ENCODE measurements at regions of chr5 and their contacts with region 1.

Region 1: DNA sequence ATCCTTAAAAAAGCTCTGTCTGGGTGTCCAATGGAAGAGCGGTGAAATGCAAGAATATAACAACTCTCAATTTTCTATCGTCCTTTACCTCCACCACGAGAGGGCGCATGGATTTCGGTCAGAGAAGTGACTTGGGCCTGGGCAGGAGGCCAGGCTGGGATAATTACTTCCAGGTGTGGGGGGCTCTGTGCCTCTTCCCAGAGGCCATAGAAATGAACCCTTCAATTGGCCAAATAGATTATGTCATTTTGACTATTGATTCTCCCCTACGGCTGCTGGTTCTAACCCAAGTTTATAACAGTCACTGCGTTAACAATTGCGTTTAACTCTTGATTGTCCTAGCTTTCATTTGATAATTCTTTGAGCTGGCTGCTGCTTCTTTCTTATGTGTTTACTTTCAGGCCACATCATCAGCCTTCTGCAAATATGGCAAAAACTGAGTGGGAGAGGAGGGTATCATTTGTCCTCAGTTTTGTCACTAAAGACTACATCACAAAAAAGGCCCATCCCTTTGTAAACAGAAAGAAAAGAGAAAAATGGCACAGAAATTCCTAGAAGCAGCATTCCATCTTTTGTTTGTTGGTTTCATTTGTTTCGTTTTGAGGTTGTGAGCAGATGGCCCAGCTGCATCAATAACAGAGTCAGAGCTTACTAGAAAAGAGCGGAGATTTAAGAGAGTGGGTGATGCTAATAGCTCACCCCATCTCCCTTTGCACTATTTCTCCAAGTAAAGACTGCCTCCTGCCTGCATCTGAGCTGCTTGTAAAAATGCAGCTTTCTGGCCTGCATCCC is 45.4 kb upstream of the ZFR start:
- DNase-seq: peak; percentile 82
- H3K4me3 Mint-ChIP-seq: no peak overlapping the region
- H3K27ac Mint-ChIP-seq: no peak overlapping the region
- H3K4me1 Mint-ChIP-seq: no peaks in the 10 kb centered on the region
- H3K27me3 Mint-ChIP-seq: no peaks in the 10 kb centered on the region
- CTCF ChIP-seq: peak; percentile 82

Region 2: GRCh38 chr5:31886206-31886605 is 603.8 kb before region 1 on chr5:
- CTCF ChIA-PET with region 1: interaction called, 11 read pairs
- intact Hi-C with region 1: no loop called
- DNase-seq: no peak
- H3K4me3 Mint-ChIP-seq: no peak overlapping the region
- H3K27ac Mint-ChIP-seq: no peak overlapping the region
- H3K4me1 Mint-ChIP-seq: peaks cover 14% of the 10 kb centered on the region
- H3K27me3 Mint-ChIP-seq: peaks cover 44% of the 10 kb centered on the region
- CTCF ChIP-seq: no peak

Region 3: DNA sequence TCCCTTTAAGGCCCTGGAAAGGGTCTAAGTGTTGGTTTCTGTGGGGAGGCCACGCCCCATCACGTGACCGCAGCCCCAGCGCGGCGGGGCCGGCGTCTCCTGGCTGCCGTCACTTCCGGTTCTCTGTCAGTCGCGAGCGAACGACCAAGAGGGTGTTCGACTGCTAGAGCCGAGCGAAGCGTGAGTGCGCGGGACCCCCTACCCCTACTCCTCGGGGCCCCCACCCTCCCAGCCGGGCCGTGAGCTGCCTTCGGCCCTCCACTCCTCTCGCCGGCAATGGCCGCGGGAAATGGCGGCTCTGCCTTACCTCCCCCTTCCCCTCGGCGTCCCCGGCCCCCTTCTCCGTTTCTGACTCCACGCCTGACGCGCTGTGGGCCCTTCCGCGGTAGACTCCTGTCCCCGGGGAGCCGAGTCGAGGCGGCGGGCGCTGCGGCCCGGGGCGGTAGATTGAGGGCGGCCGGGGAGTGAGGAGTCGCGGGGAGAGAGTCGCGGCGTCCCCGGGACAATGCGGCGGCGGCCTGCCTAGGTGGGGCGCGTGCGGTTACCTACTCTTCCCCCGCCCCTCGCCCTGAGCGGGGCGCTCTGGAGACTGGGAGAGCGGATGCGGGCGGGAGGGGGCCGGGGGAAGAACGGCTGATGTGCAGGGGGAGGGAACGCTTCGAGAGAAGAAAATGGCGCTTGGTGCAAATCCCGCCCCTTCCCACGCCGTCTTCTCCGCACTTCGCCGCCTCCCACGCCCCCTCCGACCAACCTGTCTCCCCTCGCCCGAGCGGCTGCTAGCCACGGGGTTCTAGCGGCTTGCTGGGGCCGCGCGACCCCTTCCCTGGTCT is 95.7 kb after region 1 on chr5 and contains the start of gene SUB1:
- CTCF ChIA-PET with region 1: interaction called, 61 read pairs
- intact Hi-C with region 1: loop called (anchors 1 kb)
- DNase-seq: peak; percentile 94
- H3K4me3 Mint-ChIP-seq: peak within 1 kb of the TSS; percentile 96
- H3K27ac Mint-ChIP-seq: peak within 1 kb of the TSS; percentile 97
- H3K4me1 Mint-ChIP-seq: peaks cover 42% of the 10 kb centered on the region
- H3K27me3 Mint-ChIP-seq: no peaks in the 10 kb centered on the region
- CTCF ChIP-seq: no peak
- total RNA-seq, gene SUB1: 312 and 334 TPM in 2 replicates

Region 4: GRCh38 chr5:32613050-32613672 is 123.2 kb after region 1 on chr5:
- CTCF ChIA-PET with region 1: no interaction called
- intact Hi-C with region 1: loop called (anchors 1 kb)
- DNase-seq: peak; percentile 88
- H3K4me3 Mint-ChIP-seq: no peak overlapping the region
- H3K27ac Mint-ChIP-seq: no peak overlapping the region
- H3K4me1 Mint-ChIP-seq: peaks cover 11% of the 10 kb centered on the region
- H3K27me3 Mint-ChIP-seq: no peaks in the 10 kb centered on the region
- CTCF ChIP-seq: peak; percentile 81

Region 5: GRCh38 chr5:32916648-32917047 is 426.7 kb after region 1 on chr5:
- CTCF ChIA-PET with region 1: no interaction called
- intact Hi-C with region 1: loop called (anchors 10 kb)
- DNase-seq: peak; percentile 50
- H3K4me3 Mint-ChIP-seq: no peak overlapping the region
- H3K27ac Mint-ChIP-seq: no peak overlapping the region
- H3K4me1 Mint-ChIP-seq: no peaks in the 10 kb centered on the region
- H3K27me3 Mint-ChIP-seq: peaks cover 25% of the 10 kb centered on the region
- CTCF ChIP-seq: peak; percentile 54

Measured in Calu3 (cell line).